Heart left ventricle (tissue), 16 donors: ENCODE measurements at regions of chr6 and their contacts with region 1.

Region 1: DNA sequence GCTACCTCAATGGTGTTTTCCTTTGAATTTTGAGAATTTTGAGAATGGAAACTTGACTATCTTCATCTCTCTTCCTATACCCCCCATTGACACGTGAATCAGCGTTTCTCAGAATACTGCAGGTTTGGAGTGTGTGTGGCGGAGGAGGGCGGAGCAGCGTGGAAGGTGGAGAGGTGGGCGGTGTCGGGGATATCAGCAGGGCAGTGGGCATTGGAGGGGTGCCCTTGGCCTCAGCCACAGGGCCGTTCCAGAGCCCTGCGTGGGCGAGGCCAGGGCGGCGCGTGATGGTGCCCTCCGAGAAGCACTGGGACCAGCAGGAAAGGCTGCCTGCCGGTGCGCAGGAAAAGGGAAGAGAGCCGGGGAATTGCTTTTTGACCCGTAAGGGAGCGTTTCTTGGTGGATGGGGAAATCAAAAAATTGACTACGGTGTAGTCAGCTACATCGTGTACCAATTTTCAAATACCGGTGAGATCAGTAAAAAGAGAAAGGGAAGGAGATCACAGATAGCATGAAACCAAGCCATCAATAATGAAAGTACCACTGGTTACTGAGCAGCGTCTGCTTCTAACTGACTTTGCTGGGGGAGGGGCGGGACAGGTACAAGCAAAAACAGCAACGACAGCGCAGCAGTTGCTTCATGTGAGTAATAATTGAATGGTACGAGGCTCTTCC is 82.7 kb upstream of the DUSP22 start:
- DNase-seq: no peak
- ATAC-seq: no peak
- H3K4me3 ChIP-seq: peak overlapping the region in 1 of 12 donors; percentile 45
- H3K27ac ChIP-seq: no peak overlapping the region
- H3K4me1 ChIP-seq: no peaks in the 10 kb centered on the region
- H3K27me3 ChIP-seq: peaks cover 0 to 18% (median 0%) of the 10 kb centered on the region in 9 donors
- CTCF ChIP-seq: no peak
- POLR2A ChIP-seq: no peak

Region 2: DNA sequence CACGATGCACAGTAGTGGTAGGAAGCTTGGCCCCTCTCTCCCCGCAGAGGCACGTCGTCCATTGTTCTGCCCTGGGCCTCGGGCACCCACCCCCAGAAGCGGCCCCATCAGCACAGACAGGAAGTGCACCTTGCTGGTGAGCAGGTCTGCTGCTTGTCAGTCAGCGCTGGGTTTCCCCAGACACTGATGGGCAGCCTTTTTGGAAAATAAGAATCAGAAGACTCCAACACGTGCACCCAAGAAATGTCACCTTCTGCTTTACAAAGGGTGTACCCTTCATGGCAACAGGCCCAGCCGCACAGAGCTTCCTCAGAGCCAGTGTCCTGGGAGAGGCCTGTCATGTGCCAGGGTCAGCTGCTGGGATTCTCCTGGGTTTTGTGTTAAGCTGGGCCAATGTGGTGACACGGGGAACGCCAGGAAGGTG is 147.3 kb after region 1 on chr6:
- intact Hi-C with region 1: no loop called
- DNase-seq: peak in 3 of 5 donors; percentile 50 to 70 (median 66)
- ATAC-seq: peak in 2 of 4 donors; percentile 47 to 60
- H3K4me3 ChIP-seq: no peak overlapping the region
- H3K27ac ChIP-seq: no peak overlapping the region
- H3K4me1 ChIP-seq: peaks cover 0 to 5% (median 0%) of the 10 kb centered on the region in 12 donors
- H3K27me3 ChIP-seq: no peaks in the 10 kb centered on the region
- CTCF ChIP-seq: no peak
- POLR2A ChIP-seq: no peak

Region 3: GRCh38 chr6:389622-390021 is 180.1 kb after region 1 on chr6:
- intact Hi-C with region 1: loop called in 1 of 10 experiments (anchors 10 kb)
- DNase-seq: no peak
- ATAC-seq: no peak
- H3K4me3 ChIP-seq: no peak overlapping the region
- H3K27ac ChIP-seq: no peak overlapping the region
- H3K4me1 ChIP-seq: peaks cover 3 to 33% (median 19%) of the 10 kb centered on the region in 12 donors
- H3K27me3 ChIP-seq: peaks cover 29 to 96% (median 65%) of the 10 kb centered on the region in 9 donors
- CTCF ChIP-seq: no peak
- POLR2A ChIP-seq: no peak